Pancreas (tissue), 10 donors: ENCODE measurements at regions of chrX and their contacts with region 1.

Region 1: GRCh38 chrX:151753313-151754041 is 18.9 kb downstream of the CNGA2 start:
- DNase-seq: peak; percentile 22 to 85 (median 66)
- ATAC-seq: peak; percentile 94 to 98 (median 96)
- H3K4me3 ChIP-seq: no peak overlapping the region
- H3K27ac ChIP-seq: no peak overlapping the region
- H3K4me1 ChIP-seq: no peaks in the 10 kb centered on the region
- H3K27me3 ChIP-seq: peaks cover 0 to 21% (median 0%) of the 10 kb centered on the region in 4 donors
- CTCF ChIP-seq: peak; percentile 64 to 87 (median 86)

Region 2: DNA sequence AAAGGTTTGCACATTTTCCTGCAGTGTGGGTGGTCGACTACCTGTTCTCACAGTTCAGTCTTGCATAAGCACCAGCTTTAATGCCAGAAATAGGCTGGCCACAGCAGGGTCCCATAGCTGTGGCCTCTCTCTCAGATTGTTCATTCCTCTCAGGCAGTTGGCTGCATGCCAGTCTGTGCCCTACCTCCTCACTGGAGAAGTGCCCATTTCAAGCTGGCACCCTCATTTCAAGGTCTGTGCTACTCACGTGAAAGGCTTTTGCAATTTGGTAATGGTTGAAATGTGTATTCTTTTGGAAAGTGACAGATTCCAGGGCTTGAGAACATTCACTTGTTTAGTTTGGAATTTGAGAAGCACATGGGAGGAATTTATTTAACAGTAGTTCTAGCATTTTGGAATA is 1089.2 kb before region 1 on chrX:
- intact Hi-C with region 1: no loop called
- DNase-seq: peak; percentile 67 to 85 (median 82)
- ATAC-seq: peak; percentile 79 to 91 (median 86)
- H3K4me3 ChIP-seq: no peak overlapping the region
- H3K27ac ChIP-seq: peak overlapping the region in 1 of 4 donors; percentile 4
- H3K4me1 ChIP-seq: peaks cover 0 to 15% (median 6%) of the 10 kb centered on the region in 3 donors
- H3K27me3 ChIP-seq: no peaks in the 10 kb centered on the region
- CTCF ChIP-seq: no peak

Region 3: DNA sequence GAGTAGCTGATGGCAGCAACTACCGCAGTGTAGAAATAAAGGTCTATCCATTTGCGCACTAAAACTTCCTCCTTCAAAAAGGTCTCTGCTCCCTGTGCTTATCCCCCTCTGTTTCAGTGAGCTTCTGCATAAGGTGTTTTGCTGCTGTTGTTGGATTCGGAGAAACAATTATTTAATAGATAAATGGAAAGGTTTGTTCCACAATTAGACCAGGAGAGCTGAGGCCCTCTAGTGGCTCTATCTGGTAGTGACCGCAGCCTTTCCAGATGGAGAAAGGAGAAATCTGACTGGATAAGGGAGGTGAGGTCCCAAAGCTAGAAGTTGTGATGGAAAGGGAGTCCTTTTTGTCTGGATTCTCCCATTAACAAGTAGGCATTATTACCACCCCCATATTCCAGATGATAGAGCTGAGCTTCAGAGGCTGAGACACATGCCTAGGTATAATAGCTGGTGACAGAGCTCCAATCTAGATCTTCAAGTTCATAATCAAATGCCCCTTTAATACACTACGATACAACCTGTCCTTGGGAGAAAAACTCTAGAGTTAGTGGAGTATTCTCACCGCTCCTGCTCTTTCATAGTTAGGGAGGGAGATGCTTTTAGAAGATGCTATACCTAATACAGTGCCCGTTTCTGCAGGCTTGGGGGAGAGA is 879.1 kb after region 1 on chrX:
- intact Hi-C with region 1: loop called in 2 of 3 experiments (anchors 5 kb)
- DNase-seq: peak in 4 of 6 donors; percentile 4 to 88 (median 64)
- ATAC-seq: peak; percentile 48 to 83 (median 68)
- H3K4me3 ChIP-seq: no peak overlapping the region
- H3K27ac ChIP-seq: no peak overlapping the region
- H3K4me1 ChIP-seq: no peaks in the 10 kb centered on the region
- H3K27me3 ChIP-seq: peaks cover 0 to 14% (median 3%) of the 10 kb centered on the region in 4 donors
- CTCF ChIP-seq: peak; percentile 77 to 89 (median 87)

Region 4: DNA sequence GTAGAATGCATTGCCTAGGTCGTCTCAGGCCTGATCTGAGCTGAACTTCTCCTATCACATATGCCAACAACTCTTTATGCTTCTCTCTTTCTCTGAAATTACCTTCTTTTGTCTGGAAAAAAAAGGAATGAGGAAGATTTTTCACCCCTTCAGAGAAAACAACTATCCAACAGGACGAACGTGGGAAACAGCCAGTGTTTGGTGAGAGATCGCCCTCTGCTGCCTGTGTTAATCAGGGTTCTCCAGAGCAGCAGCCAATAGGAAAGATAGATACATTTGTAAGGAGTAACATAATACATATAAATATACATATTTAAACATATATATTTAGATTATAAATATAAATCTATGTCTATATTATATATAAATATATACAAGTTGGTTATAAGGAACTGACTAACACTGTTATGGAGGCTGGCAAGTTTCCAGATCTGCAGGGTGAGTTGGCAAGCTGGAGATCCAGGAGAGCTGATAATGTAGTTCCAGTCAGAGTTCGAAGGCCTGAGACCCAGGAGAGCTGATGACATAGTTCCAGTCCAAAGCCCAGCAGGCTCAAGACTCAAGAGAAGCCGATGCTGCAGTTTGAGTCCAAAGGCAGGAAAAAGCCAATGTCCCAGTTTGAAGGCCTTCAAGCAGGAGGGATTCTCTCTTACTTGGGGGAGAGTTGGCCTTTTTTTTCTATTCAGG is 1063.7 kb after region 1 on chrX:
- intact Hi-C with region 1: loop called in 1 of 3 experiments (anchors 10 kb)
- DNase-seq: peak in 2 of 6 donors; percentile 2 to 21
- ATAC-seq: peak in 3 of 4 donors; percentile 69 to 73 (median 72)
- H3K4me3 ChIP-seq: no peak overlapping the region
- H3K27ac ChIP-seq: no peak overlapping the region
- H3K4me1 ChIP-seq: no peaks in the 10 kb centered on the region
- H3K27me3 ChIP-seq: peaks cover 0 to 11% (median 0%) of the 10 kb centered on the region in 4 donors
- CTCF ChIP-seq: peak in 2 of 4 donors; percentile 8 to 17